Vagina (tissue), 2 donors: ENCODE measurements at regions of chr7 and their contacts with region 1.

Region 1: DNA sequence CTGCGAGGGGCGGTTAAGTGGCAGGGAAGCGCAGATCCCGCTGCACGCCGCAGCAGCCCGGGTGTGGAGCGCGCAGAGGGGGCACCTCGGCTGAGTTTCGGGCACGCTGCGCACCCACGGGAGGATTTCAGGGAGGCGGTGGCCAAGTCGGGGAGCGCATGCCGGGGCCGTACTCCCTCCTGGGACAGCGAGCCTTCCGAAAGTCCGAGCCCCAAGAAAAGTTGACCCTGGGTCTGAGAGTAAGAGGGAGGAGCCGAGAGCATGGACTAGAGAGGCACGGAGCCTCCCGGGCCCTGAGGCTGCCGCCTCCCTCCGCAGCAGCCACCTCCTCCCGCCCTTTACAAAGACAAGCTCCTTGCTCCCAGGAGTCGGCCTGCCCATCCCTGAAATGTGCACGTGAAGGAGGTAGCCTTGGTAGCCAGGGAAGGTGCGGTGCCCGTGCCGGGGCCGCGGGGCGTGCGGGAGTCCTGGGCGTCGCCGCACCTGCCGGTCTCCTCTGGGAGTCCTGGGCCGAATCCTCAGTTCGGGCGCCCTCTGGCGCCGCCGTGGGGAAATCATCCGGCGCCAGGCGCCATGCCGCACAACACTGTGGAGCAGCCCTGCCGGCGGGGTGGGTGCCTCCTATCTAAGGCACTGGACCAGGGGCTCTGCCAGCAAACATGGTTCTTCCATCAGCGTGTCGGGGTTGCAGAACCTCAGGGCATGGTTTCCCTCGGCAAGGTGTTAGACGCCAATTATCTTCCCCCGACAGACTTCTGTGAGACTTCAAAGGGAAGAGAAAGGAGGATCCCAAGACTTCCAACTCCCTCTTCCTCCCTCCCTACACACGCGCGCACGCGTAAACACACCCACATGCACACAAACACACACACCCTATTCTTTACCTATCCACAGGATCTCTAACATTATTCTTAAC is 104.0 kb downstream of the TRIL start:
- DNase-seq: no peak
- H3K4me3 ChIP-seq: peak overlapping the region; percentile 49 to 56
- H3K27ac ChIP-seq: no peak overlapping the region
- H3K4me1 ChIP-seq: peaks cover 8% of the 10 kb centered on the region
- H3K27me3 ChIP-seq: no peaks in the 10 kb centered on the region
- CTCF ChIP-seq: peak; percentile 63 to 92 (median 91)
- POLR2A ChIP-seq: no peak

Region 2: DNA sequence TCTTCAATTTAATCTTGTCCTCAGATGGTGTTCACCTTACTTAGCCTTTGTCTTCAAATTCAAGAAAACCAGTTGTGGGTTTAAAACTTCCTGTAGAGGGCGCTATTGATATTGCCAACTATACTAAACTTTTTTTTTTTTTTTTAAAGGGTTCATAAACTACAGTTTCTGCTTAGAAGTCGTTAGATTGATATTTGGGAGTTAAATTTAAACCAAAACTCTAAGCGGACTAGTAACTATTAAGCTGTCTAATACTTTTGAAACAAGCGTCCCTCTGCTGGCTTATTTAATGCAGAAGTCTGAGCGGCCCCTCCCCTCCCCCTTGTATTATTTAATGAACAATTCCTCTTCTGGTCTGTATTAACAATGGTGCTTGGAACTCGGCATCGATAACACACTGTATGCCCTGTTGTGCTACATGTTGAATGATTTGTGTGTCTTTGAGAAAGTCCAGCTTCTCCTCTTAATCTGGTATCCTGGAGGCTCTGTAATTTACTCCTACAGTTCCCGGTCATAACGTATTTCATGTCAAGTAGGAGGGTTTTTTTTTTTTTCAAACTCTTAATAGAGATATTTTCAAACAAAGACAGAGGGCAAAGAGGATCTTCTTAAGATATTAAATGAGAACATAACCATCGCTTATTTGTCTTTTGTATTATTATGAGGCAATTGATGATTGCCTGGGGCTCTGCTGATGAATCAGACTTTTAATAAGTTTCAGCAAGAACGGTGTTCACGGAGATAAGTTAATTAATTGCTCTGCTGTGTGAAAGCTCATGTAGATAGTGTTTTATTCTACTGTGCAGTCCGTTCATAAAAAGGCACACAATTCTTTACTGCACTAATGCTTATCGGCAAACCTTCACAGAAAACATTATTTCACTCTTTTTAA is 464.3 kb before region 1 on chr7:
- intact Hi-C with region 1: loop called (anchors 5 kb)
- DNase-seq: no peak
- H3K4me3 ChIP-seq: peak overlapping the region; percentile 29 to 39
- H3K27ac ChIP-seq: peak overlapping the region; percentile 45
- H3K4me1 ChIP-seq: no peaks in the 10 kb centered on the region
- H3K27me3 ChIP-seq: no peaks in the 10 kb centered on the region
- CTCF ChIP-seq: peak in 2 of 3 experiments; percentile 44 to 54
- POLR2A ChIP-seq: no peak